CD8-positive, alpha-beta T cell (primary cell): ENCODE measurements at regions of chr16 and their contacts with region 1.

Region 1: DNA sequence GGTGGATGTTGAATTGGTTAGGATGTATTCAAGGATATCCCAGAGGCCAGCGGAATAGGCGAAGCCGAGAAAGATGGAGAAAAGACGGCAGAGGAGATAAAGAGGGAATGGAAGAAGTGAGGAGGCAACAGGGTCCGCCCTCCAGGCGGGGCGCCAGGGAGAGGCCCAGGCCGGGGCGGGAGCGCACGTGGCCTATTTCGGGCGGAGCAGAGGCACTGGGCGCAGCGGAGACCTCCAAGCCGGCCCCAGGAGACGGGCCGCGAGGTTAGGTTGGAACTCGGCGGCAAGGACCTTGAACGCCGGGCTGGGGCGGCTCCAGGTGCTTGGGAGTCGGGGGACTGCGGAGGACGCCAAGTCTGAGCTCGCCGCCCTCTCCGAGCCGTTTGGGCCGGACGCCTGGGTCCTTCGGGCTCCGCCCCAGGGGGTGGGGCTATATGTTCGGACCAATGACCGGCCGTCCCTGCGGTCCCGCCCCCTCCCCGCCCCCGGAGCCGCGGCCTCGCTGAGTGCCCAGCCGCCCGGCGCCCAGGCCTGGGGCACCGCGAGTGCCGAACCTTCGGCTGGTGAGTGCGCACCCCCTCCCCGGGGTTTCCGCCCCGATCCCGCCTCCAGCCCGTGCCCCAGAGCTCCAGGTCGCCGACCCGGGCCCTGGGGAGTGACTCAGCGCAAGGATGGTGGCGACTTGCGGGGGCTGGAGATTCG is at the start of gene ZNF771:
- DNase-seq: peak; percentile 71 to 94 (median 89)
- ATAC-seq: peak; percentile 79
- H3K4me3 ChIP-seq: peak within 1 kb of the TSS; percentile 72 to 90
- H3K4me3 Mint-ChIP-seq: peak within 1 kb of the TSS; percentile 89
- H3K27ac ChIP-seq: peak within 1 kb of the TSS; percentile 61 to 69
- H3K27ac Mint-ChIP-seq: peak within 1 kb of the TSS; percentile 93
- H3K4me1 ChIP-seq: peaks cover 19% of the 10 kb centered on the region
- H3K4me1 Mint-ChIP-seq: peaks cover 26% of the 10 kb centered on the region
- H3K27me3 ChIP-seq: no peaks in the 10 kb centered on the region
- H3K27me3 Mint-ChIP-seq: no peaks in the 10 kb centered on the region
- CTCF ChIP-seq: no peak
- total RNA-seq, gene ZNF771: 0.87 to 0.92 TPM

Region 2: DNA sequence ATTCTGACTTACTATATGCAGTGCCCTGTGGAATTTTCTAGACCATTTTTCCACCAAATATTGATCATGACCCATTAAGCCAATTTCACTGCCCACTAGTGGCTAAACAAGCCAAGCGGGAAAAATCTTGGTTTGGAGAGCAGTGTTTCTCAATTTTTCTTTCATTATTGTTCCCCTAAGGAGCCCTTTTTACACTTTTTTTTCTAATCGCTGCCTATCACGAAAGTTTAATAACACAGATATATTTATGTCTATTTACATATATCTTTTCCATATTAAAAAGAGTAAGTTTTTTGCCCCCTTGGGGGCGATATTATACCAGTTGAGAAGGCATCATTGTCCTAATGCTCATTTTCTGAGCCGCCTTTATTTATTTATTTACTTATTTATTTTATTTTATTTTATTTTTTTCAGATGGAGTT is 365.4 kb before region 1 on chr16:
- CTCF ChIA-PET with region 1: interaction called, 3 read pairs
- POLR2A ChIA-PET with region 1: no interaction called
- intact Hi-C with region 1: loop called in 1 of 2 experiments (anchors 2 kb)
- DNase-seq: peak in 2 of 9 experiments; percentile 43 to 52
- ATAC-seq: no peak
- H3K4me3 ChIP-seq: no peak overlapping the region
- H3K4me3 Mint-ChIP-seq: no peak overlapping the region
- H3K27ac ChIP-seq: no peak overlapping the region
- H3K27ac Mint-ChIP-seq: no peak overlapping the region
- H3K4me1 ChIP-seq: no peaks in the 10 kb centered on the region
- H3K4me1 Mint-ChIP-seq: no peaks in the 10 kb centered on the region
- H3K27me3 ChIP-seq: peaks cover 0 to 3% of the 10 kb centered on the region in 2 experiments
- H3K27me3 Mint-ChIP-seq: peaks cover 3% of the 10 kb centered on the region
- CTCF ChIP-seq: peak; percentile 52

Region 3: DNA sequence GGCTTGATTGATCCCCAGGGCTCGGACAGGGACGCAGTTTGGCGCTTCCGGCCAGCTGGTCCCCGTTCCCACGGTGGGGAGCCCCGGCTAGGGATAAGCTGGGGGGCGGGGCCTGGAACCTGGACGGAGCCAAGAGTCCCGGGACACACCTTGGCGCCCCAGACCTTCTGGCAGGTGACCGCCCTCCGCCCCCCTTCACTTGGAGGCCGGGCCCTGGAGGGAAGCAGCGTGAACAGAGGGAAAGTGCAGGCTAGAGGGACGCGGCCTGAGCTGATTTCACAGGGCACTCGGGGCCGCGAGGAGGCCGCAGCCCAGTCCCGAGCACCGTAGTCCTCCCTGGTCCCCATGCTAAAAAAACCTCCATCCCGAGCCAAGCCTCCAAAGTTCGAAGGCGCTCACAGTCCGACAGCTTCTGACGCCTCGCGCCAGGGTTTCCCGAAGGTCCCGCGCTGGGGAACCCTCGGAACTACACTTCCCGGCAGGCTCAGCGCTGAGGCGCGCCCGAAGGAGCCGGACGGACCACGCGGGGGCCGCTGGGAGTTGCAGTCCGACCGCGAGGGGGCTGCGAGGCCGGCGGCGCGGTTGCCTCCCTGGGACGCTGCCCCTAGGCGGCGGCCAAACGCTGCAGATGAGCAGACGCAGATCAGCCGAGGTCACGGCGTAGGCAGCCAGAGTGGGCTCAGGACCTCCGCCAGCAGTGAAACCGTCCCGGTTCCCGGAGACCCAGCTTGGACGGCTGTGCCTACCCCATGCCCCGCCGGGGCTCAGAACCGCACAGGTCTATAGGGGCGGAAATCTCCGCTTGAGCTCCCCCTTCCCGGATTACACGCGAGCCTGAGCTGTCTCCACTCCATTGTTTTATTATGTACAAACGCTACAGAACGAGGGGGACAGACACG is 315.5 kb before region 1 on chr16 and contains the start of gene TBX6:
- CTCF ChIA-PET with region 1: interaction called, 7 read pairs
- POLR2A ChIA-PET with region 1: interaction called, 3 read pairs
- intact Hi-C with region 1: loop called (anchors 5 to 10 kb)
- DNase-seq: peak; percentile 86 to 97 (median 92)
- ATAC-seq: peak; percentile 82
- H3K4me3 ChIP-seq: peak within 1 kb of the TSS; percentile 59 to 69
- H3K4me3 Mint-ChIP-seq: peak within 1 kb of the TSS; percentile 87
- H3K27ac ChIP-seq: peak within 1 kb of the TSS; percentile 58 to 69
- H3K27ac Mint-ChIP-seq: peak within 1 kb of the TSS; percentile 91
- H3K4me1 ChIP-seq: peaks cover 55% of the 10 kb centered on the region
- H3K4me1 Mint-ChIP-seq: peaks cover 48% of the 10 kb centered on the region
- H3K27me3 ChIP-seq: no peaks in the 10 kb centered on the region
- H3K27me3 Mint-ChIP-seq: no peaks in the 10 kb centered on the region
- CTCF ChIP-seq: peak; percentile 73
- total RNA-seq, gene TBX6: 0.16 to 0.22 TPM

Region 4: GRCh38 chr16:30173054-30173453 is 234.2 kb before region 1 on chr16:
- CTCF ChIA-PET with region 1: no interaction called
- POLR2A ChIA-PET with region 1: no interaction called
- intact Hi-C with region 1: no loop called
- DNase-seq: no peak
- ATAC-seq: no peak
- H3K4me3 ChIP-seq: no peak overlapping the region
- H3K4me3 Mint-ChIP-seq: no peak overlapping the region
- H3K27ac ChIP-seq: no peak overlapping the region
- H3K27ac Mint-ChIP-seq: no peak overlapping the region
- H3K4me1 ChIP-seq: no peaks in the 10 kb centered on the region
- H3K4me1 Mint-ChIP-seq: peaks cover 2% of the 10 kb centered on the region
- H3K27me3 ChIP-seq: no peaks in the 10 kb centered on the region
- H3K27me3 Mint-ChIP-seq: no peaks in the 10 kb centered on the region
- CTCF ChIP-seq: no peak

Region 5: DNA sequence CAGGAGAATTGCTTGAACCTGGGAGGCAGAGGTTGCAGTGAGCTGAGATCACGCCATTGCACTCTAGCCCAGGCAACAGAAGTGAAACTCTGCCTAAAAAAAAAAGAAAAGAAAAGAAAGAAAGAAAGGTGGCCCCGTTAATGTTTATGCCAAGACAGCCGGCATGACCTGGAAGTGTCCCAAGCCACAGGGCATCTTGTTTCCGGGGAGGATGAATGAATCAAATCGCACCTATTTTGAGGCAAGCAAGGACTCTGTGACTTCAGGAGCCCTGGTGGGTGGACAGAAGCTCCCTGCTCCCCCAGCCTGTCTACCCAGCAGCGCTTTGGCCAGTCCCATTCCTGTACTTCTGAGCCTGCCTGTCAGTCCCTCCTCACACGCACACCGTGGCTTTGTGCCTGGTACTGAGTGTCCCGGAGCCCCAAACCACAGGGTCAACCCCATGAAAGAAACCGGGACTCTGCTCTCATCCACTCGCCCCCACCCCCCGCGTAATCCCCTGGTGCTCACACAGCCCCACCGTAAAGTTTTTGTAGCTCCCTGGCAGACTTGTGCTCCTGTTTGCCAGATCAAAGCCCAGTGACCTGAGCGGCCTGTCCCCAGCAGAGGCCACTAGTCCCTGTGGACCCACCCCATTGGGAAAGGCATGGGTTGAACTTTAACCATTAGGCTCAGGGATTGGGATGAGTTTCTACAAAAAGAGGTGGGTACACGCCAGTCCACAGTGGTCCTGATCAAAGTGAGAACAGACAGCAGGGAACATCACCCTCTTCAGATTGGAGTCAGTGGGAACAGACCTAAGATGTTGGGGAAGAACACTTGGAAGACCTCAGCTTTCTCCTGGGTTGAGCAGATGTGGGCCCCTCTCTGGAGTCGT is 71.4 kb before region 1 on chr16:
- CTCF ChIA-PET with region 1: interaction called, 7 read pairs
- POLR2A ChIA-PET with region 1: interaction called, 4 read pairs
- intact Hi-C with region 1: loop called (anchors 1 to 5 kb)
- DNase-seq: peak in 4 of 9 experiments; percentile 32 to 72 (median 60)
- ATAC-seq: peak; percentile 2
- H3K4me3 ChIP-seq: peak overlapping the region; percentile 38 to 51
- H3K4me3 Mint-ChIP-seq: peak overlapping the region; percentile 86
- H3K27ac ChIP-seq: peak overlapping the region; percentile 50 to 52
- H3K27ac Mint-ChIP-seq: peak overlapping the region; percentile 86
- H3K4me1 ChIP-seq: peaks cover 10% of the 10 kb centered on the region
- H3K4me1 Mint-ChIP-seq: peaks cover 32% of the 10 kb centered on the region
- H3K27me3 ChIP-seq: no peaks in the 10 kb centered on the region
- H3K27me3 Mint-ChIP-seq: no peaks in the 10 kb centered on the region
- CTCF ChIP-seq: no peak

Region 6: GRCh38 chr16:30370444-30371247 is 36.6 kb before region 1 on chr16 and contains the start of gene TBC1D10B:
- CTCF ChIA-PET with region 1: interaction called, 26 read pairs
- POLR2A ChIA-PET with region 1: interaction called, 5 read pairs
- intact Hi-C with region 1: loop called (anchors 1 kb)
- DNase-seq: peak; percentile 98 to 100 (median 99)
- ATAC-seq: peak; percentile 84
- H3K4me3 ChIP-seq: peak within 1 kb of the TSS; percentile 79 to 83
- H3K4me3 Mint-ChIP-seq: peak within 1 kb of the TSS; percentile 89
- H3K27ac ChIP-seq: peak within 1 kb of the TSS; percentile 36 to 84
- H3K27ac Mint-ChIP-seq: peak within 1 kb of the TSS; percentile 87
- H3K4me1 ChIP-seq: peaks cover 42% of the 10 kb centered on the region
- H3K4me1 Mint-ChIP-seq: peaks cover 54% of the 10 kb centered on the region
- H3K27me3 ChIP-seq: no peaks in the 10 kb centered on the region
- H3K27me3 Mint-ChIP-seq: no peaks in the 10 kb centered on the region
- CTCF ChIP-seq: no peak
- total RNA-seq, gene TBC1D10B: 12.3 to 13.8 TPM

Region 7: GRCh38 chr16:30395155-30395991 is 11.9 kb before region 1 on chr16 and contains the start of gene ZNF48:
- CTCF ChIA-PET with region 1: interaction called, 46 read pairs
- POLR2A ChIA-PET with region 1: interaction called, 13 read pairs
- intact Hi-C with region 1: loop called in 1 of 2 experiments (anchors 1 kb)
- DNase-seq: peak in 8 of 9 experiments; percentile 46 to 81 (median 60)
- ATAC-seq: peak; percentile 68
- H3K4me3 ChIP-seq: peak within 1 kb of the TSS; percentile 69 to 77
- H3K4me3 Mint-ChIP-seq: peak within 1 kb of the TSS; percentile 81
- H3K27ac ChIP-seq: peak within 1 kb of the TSS; percentile 34 to 40
- H3K27ac Mint-ChIP-seq: peak within 1 kb of the TSS; percentile 69
- H3K4me1 ChIP-seq: peaks cover 50% of the 10 kb centered on the region
- H3K4me1 Mint-ChIP-seq: peaks cover 38% of the 10 kb centered on the region
- H3K27me3 ChIP-seq: no peaks in the 10 kb centered on the region
- H3K27me3 Mint-ChIP-seq: no peaks in the 10 kb centered on the region
- CTCF ChIP-seq: no peak
- total RNA-seq, gene ZNF48: 2.3 to 2.4 TPM

Region 8: GRCh38 chr16:31010585-31011325 is 603.5 kb after region 1 on chr16 and contains the start of gene STX1B:
- CTCF ChIA-PET with region 1: no interaction called
- POLR2A ChIA-PET with region 1: no interaction called
- intact Hi-C with region 1: no loop called
- DNase-seq: peak in 8 of 9 experiments; percentile 42 to 73 (median 62)
- ATAC-seq: peak; percentile 86
- H3K4me3 ChIP-seq: peak within 1 kb of the TSS; percentile 35 to 61
- H3K4me3 Mint-ChIP-seq: peak within 1 kb of the TSS; percentile 84
- H3K27ac ChIP-seq: no peak within 1 kb of the TSS
- H3K27ac Mint-ChIP-seq: no peak within 1 kb of the TSS
- H3K4me1 ChIP-seq: peaks cover 7% of the 10 kb centered on the region
- H3K4me1 Mint-ChIP-seq: peaks cover 19% of the 10 kb centered on the region
- H3K27me3 ChIP-seq: peaks cover 3 to 17% of the 10 kb centered on the region in 2 experiments
- H3K27me3 Mint-ChIP-seq: peaks cover 21% of the 10 kb centered on the region
- CTCF ChIP-seq: no peak
- total RNA-seq, gene STX1B: 2.3 to 2.7 TPM